ENCODE measurements at regions of chr5 and their contacts with region 1.

Region 1: GRCh38 chr5:88883059-88883835 is at the start of gene MEF2C:
- DNase-seq: peak in 1 of 2 experiments; percentile 43
- H3K4me3 ChIP-seq: peak within 1 kb of the TSS; percentile 49
- H3K4me3 Mint-ChIP-seq: peak within 1 kb of the TSS; percentile 79
- H3K27ac Mint-ChIP-seq: peak within 1 kb of the TSS; percentile 48
- H3K4me1 ChIP-seq: peaks cover 11% of the 10 kb centered on the region; the same call in 1 of the 2 replicates
- H3K4me1 Mint-ChIP-seq: peaks cover 5% of the 10 kb centered on the region
- H3K27me3 ChIP-seq: peaks cover 1% of the 10 kb centered on the region; the same call in 1 of the 2 replicates
- H3K27me3 Mint-ChIP-seq: peaks cover 3% of the 10 kb centered on the region
- CTCF ChIP-seq: no peak
- total RNA-seq, gene MEF2C: 1.5 and 1.9 TPM in 2 replicates

Region 2: DNA sequence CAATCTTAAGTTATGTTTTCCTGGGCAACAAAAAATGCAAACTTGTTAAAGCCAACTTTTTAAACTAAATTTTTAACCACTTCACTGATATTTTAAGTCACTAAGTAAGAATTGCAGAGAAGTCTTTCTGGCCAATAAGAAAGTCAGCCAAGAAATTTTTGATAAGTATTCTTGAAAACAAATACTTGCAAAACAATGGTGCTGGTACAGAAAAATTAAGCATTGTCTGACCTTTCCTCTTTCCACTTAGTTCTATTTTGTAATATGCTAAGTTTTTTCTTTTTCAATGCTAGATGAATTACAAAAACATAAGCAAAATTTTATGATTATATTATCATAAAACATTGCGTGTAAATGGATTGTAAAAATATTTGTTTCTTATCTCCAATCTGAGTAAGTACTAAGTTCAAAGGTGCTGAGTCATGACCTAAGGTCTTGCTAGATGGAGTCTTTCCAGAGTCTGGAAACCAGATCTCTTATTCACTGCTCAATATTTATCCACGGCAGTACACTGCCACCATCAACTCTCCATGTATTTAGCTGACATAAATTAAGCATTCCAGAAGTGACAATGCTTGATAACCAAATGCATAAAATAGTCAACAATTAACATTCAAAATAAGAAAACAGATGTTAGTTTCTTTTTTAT is 139.9 kb before region 1 on chr5:
- CTCF ChIA-PET with region 1: no interaction called
- POLR2A ChIA-PET with region 1: no interaction called
- intact Hi-C with region 1: loop called (anchors 5 kb)
- DNase-seq: no peak
- H3K4me3 ChIP-seq: no peak overlapping the region
- H3K4me3 Mint-ChIP-seq: no peak overlapping the region
- H3K27ac Mint-ChIP-seq: no peak overlapping the region
- H3K4me1 ChIP-seq: peaks cover 17% of the 10 kb centered on the region
- H3K4me1 Mint-ChIP-seq: peaks cover 7% of the 10 kb centered on the region
- H3K27me3 ChIP-seq: no peaks in the 10 kb centered on the region
- H3K27me3 Mint-ChIP-seq: no peaks in the 10 kb centered on the region
- CTCF ChIP-seq: no peak

Measured in Caco-2 (cell line).